GM12878 (cell line): ENCODE measurements at regions of chr5 and their contacts with region 1.

Region 1: DNA sequence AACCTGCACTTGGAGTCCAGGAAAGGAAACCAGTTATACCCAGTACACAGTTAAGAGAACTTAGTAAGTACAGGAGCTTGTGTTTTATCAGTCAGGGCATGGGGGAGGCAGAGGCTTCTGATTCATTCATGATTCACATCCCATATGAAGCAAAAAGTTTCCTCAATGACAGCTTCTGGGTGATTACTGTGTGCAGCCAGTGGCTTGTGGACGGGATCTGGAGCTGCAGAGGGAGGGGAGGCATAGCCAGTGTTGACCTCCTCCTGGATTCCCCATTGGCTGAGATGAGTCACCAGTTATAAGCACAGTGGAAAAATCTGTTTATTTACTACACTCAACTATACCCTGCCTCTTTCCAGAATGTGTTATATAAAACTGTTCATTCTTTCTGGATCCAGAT is 17.7 kb downstream of the IL31RA start:
- DNase-seq: no peak
- ATAC-seq: peak; percentile 27
- H3K4me3 ChIP-seq: no peak overlapping the region
- H3K27ac ChIP-seq: no peak overlapping the region
- H3K4me1 ChIP-seq: no peaks in the 10 kb centered on the region
- H3K27me3 ChIP-seq: no peaks in the 10 kb centered on the region; a peak in 1 of 4 replicates
- CTCF ChIP-seq: no peak
- EP300 ChIP-seq: no peak
- POLR2A ChIP-seq: no peak
- RAD21 ChIP-seq: no peak

Region 2: DNA sequence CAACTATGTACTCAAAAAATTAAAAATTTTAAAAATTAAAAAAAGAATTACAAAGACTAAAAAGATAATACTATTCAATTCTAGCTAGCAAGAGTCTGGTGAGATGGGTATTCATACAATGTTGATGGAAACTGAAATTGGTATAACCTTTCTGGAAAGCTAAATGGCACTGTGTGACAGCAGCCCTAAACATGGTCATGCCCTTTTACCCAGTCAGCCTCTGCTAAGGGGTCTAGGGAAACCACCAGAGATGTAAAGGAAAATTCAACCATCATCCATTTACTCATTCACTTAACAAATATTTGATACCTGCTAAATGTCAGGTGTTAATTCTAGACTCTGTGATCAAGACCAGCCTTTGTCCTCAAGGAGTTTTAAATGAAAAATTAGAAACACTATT is 11.6 kb after region 1 on chr5:
- CTCF ChIA-PET with region 1: interaction called, 8 read pairs
- POLR2A ChIA-PET with region 1: interaction called, 3 read pairs
- RAD21 ChIA-PET with region 1: interaction called, 5 read pairs
- SMC1A ChIA-PET with region 1: interaction called, 31 read pairs
- in situ Hi-C with region 1: no loop called
- intact Hi-C with region 1: no loop called
- DNase-seq: no peak
- ATAC-seq: no peak
- H3K4me3 ChIP-seq: no peak overlapping the region
- H3K27ac ChIP-seq: no peak overlapping the region
- H3K4me1 ChIP-seq: no peaks in the 10 kb centered on the region
- H3K27me3 ChIP-seq: no peaks in the 10 kb centered on the region
- CTCF ChIP-seq: no peak
- EP300 ChIP-seq: no peak
- POLR2A ChIP-seq: no peak
- RAD21 ChIP-seq: no peak

Region 3: GRCh38 chr5:56056875-56057274 is 188.0 kb after region 1 on chr5:
- CTCF ChIA-PET with region 1: no interaction called
- POLR2A ChIA-PET with region 1: no interaction called
- RAD21 ChIA-PET with region 1: no interaction called
- SMC1A ChIA-PET with region 1: no interaction called
- in situ Hi-C with region 1: no loop called
- intact Hi-C with region 1: no loop called
- DNase-seq: peak; percentile 85
- ATAC-seq: peak; percentile 78
- H3K4me3 ChIP-seq: 0 out of 2 replicates have a peak overlapping the region, but pooled peaks have one; percentile 8
- H3K27ac ChIP-seq: peak overlapping the region; percentile 47; the same call in 1 of the 2 replicates
- H3K4me1 ChIP-seq: peaks cover 41% of the 10 kb centered on the region
- H3K27me3 ChIP-seq: no peaks in the 10 kb centered on the region
- CTCF ChIP-seq: no peak
- EP300 ChIP-seq: peak in 1 of 2 experiments; percentile 48; a peak in 1 of 4 replicates
- POLR2A ChIP-seq: no peak
- RAD21 ChIP-seq: no peak